ENCODE measurements at regions of chr15 and their contacts with region 1.

Region 1: GRCh38 chr15:52417521-52417920 is 111.2 kb downstream of the MYO5A start:
- DNase-seq: peak; percentile 90
- H3K4me3 ChIP-seq: peak overlapping the region in 2 of 3 experiments; percentile 24 to 59
- H3K27ac ChIP-seq: peak overlapping the region; percentile 97
- H3K4me1 ChIP-seq: peaks cover 67% of the 10 kb centered on the region
- H3K27me3 ChIP-seq: no peaks in the 10 kb centered on the region
- CTCF ChIP-seq: no peak
- POLR2A ChIP-seq: peak; percentile 38

Region 2: DNA sequence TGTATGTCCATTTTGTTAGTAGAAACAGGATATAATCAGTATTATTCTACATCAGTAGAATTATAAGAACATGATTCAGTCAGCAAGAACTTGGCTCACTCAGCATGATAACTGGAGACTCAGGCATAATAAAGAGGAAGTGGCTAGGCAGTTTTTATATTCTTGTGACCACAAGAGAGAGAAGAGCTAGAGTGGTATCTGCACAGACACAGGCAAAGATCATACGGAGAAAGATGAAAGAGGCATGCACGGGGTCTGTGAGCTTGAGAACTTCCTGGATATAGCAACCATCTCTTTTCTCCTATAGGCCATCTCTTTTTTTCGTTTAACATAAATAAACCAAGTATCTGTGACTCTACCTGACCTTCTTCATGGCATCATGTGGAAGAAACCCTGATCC is 64.4 kb after region 1 on chr15:
- CTCF ChIA-PET with region 1: interaction called, 4 read pairs
- POLR2A ChIA-PET with region 1: no interaction called
- dilution Hi-C with region 1: no loop called
- intact Hi-C with region 1: loop called (anchors 1 kb)
- DNase-seq: peak; percentile 75
- H3K4me3 ChIP-seq: no peak overlapping the region
- H3K27ac ChIP-seq: peak overlapping the region; percentile 92
- H3K4me1 ChIP-seq: peaks cover 63% of the 10 kb centered on the region
- H3K27me3 ChIP-seq: no peaks in the 10 kb centered on the region
- CTCF ChIP-seq: no peak
- POLR2A ChIP-seq: peak; percentile 44

Region 3: GRCh38 chr15:52528991-52529926 is 111.7 kb after region 1 on chr15:
- CTCF ChIA-PET with region 1: no interaction called
- POLR2A ChIA-PET with region 1: no interaction called
- dilution Hi-C with region 1: no loop called
- intact Hi-C with region 1: loop called (anchors 1 kb)
- DNase-seq: peak; percentile 75
- H3K4me3 ChIP-seq: peak overlapping the region; percentile 32 to 89 (median 58)
- H3K27ac ChIP-seq: no peak overlapping the region
- H3K4me1 ChIP-seq: peaks cover 17% of the 10 kb centered on the region
- H3K27me3 ChIP-seq: no peaks in the 10 kb centered on the region
- CTCF ChIP-seq: peak in 1 of 2 donors; percentile 11
- POLR2A ChIP-seq: no peak

Region 4: GRCh38 chr15:52679232-52680040 is 261.9 kb after region 1 on chr15 and contains the start of gene ATOSA:
- CTCF ChIA-PET with region 1: no interaction called
- POLR2A ChIA-PET with region 1: no interaction called
- dilution Hi-C with region 1: no loop called
- intact Hi-C with region 1: loop called (anchors 2 kb)
- DNase-seq: peak; percentile 90
- H3K4me3 ChIP-seq: peak within 1 kb of the TSS; percentile 59 to 87 (median 80)
- H3K27ac ChIP-seq: peak within 1 kb of the TSS; percentile 92
- H3K4me1 ChIP-seq: peaks cover 18% of the 10 kb centered on the region
- H3K27me3 ChIP-seq: peaks cover 11 to 17% of the 10 kb centered on the region in 2 experiments
- CTCF ChIP-seq: no peak
- POLR2A ChIP-seq: no peak
- total RNA-seq, gene ATOSA: 39.1 and 41.1 TPM in 2 replicates